ENCODE measurements at regions of chr3 and their contacts with region 1.

Region 1: DNA sequence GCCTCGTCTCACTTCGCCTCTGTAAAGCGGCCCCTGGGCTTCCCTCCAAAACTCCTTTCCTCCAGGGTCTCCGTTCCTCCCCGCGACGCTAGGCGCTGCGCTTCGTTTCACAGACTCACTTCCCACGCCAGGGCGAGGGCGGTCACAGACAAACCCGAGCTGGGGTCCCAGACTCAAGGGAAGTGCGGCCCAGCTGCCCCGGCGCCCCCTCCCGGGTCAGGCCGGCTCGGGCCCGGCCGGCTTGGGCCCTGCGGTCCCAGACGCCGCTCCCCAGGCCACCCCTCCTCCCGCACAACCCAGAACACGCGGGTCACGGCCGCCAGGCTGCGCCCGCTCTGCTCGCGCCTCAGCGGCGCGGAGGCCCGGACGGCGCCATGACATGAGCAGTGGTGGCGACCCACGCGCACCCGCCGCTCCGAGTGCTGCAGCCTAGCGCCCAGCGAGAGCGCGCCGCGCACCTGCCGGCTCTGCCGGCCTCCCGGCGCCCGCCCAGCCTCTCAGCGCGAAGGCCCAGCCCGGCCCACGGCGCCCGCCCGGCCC is 547 bp downstream of the NUP210 start:
- DNase-seq: peak; percentile 86
- H3K4me3 ChIP-seq: peak overlapping the region in 1 of 2 experiments; percentile 58; a peak in 2 of 4 replicates
- H3K27ac ChIP-seq: peak overlapping the region in 1 of 2 experiments; percentile 63; a peak in 2 of 4 replicates
- H3K4me1 ChIP-seq: peaks cover 3 to 26% of the 10 kb centered on the region in 2 experiments; a peak in 2 of 4 replicates
- H3K27me3 ChIP-seq: 0 out of 2 replicates have a peak, but pooled peaks cover 8% of the 10 kb centered on the region
- CTCF ChIP-seq: no peak
- EP300 ChIP-seq: no peak
- RAD21 ChIP-seq: no peak

Region 2: GRCh38 chr3:13274551-13275332 is 144.8 kb before region 1 on chr3:
- CTCF ChIA-PET with region 1: no interaction called
- POLR2A ChIA-PET with region 1: no interaction called
- DNase-seq: no peak
- H3K4me3 ChIP-seq: no peak overlapping the region
- H3K27ac ChIP-seq: no peak overlapping the region
- H3K4me1 ChIP-seq: peaks cover 0 to 7% of the 10 kb centered on the region in 2 experiments; a peak in 2 of 4 replicates
- H3K27me3 ChIP-seq: no peaks in the 10 kb centered on the region; the same call in 1 of the 2 replicates
- CTCF ChIP-seq: no peak
- EP300 ChIP-seq: no peak
- RAD21 ChIP-seq: no peak

Region 3: DNA sequence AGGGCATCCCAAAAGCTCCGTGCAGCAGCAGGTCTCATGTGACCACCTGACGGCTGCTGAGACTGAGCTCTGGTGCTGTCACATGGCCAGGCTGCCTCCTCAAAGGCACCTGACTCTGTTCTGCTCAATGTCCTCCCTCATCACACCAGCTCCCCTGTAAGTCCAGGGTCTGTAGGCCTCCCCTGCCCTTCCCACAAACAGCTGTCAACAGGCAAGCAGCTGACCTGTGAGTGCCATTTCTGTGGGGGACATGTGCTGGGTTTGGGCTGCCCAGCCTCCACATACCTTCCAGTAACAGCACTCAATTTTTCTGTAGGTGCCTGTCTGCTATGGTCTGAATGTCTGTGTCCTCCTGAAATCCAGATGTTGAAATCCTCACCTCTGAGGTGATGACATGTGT is 10.7 kb before region 1 on chr3:
- CTCF ChIA-PET with region 1: interaction called, 11 read pairs
- POLR2A ChIA-PET with region 1: interaction called, 7 read pairs
- DNase-seq: no peak
- H3K4me3 ChIP-seq: no peak overlapping the region
- H3K27ac ChIP-seq: no peak overlapping the region
- H3K4me1 ChIP-seq: no peaks in the 10 kb centered on the region; a peak in 1 of 4 replicates
- H3K27me3 ChIP-seq: no peaks in the 10 kb centered on the region
- CTCF ChIP-seq: no peak
- EP300 ChIP-seq: no peak
- RAD21 ChIP-seq: no peak

Measured in SK-N-SH (cell line).